ENCODE measurements at regions of chr17 and their contacts with region 1.

Region 1: DNA sequence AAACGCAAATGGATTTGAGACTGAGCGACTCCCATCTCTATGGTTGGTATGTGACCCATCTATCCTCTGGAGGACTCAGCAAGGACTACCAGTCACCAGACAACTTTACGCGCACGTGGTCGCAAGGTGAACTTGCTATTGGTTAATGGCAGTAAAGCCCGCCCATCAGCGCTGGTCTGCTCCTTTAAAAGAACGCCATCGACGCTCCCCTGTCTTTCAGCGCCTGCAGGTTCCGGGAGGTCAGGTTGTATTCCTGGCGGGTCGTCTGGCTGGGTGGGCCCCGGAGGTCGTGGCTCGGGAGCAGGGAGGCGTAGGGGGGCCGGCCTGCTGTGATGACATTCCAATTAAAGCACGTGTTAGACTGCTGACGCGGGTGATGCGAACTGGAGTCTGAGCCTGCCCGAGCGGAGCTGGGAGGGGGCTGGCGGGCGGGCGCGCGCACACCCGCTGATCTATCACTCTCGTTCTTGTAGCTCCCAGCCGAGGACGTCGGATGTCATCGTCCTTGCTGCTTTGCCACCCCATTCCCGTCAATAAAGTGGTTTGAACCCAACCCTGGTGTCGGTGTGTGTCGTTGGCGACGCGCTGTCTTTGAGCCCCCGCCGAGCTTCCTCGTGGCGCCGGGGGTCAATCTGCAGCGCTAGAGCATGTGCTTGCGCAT is 15.9 kb upstream of the ERN1 start:
- DNase-seq: peak; percentile 96
- H3K4me3 ChIP-seq: peak overlapping the region; percentile 73 to 80
- H3K27ac ChIP-seq: peak overlapping the region; percentile 65 to 97
- H3K4me1 ChIP-seq: peaks cover 11 to 28% of the 10 kb centered on the region in 2 experiments
- H3K27me3 ChIP-seq: no peaks in the 10 kb centered on the region
- CTCF ChIP-seq: no peak; the same call in 1 of the 2 replicates
- EP300 ChIP-seq: no peak
- RAD21 ChIP-seq: no peak

Region 2: GRCh38 chr17:64158831-64159590 is 13.1 kb after region 1 on chr17:
- CTCF ChIA-PET with region 1: interaction called, 12 read pairs
- POLR2A ChIA-PET with region 1: interaction called, 10 read pairs
- DNase-seq: no peak
- H3K4me3 ChIP-seq: no peak overlapping the region
- H3K27ac ChIP-seq: peak overlapping the region in 1 of 2 experiments; percentile 12; a peak in 1 of 4 replicates
- H3K4me1 ChIP-seq: peaks cover 0 to 49% of the 10 kb centered on the region in 2 experiments; a peak in 2 of 4 replicates
- H3K27me3 ChIP-seq: no peaks in the 10 kb centered on the region
- CTCF ChIP-seq: no peak
- EP300 ChIP-seq: no peak
- RAD21 ChIP-seq: no peak

Region 3: DNA sequence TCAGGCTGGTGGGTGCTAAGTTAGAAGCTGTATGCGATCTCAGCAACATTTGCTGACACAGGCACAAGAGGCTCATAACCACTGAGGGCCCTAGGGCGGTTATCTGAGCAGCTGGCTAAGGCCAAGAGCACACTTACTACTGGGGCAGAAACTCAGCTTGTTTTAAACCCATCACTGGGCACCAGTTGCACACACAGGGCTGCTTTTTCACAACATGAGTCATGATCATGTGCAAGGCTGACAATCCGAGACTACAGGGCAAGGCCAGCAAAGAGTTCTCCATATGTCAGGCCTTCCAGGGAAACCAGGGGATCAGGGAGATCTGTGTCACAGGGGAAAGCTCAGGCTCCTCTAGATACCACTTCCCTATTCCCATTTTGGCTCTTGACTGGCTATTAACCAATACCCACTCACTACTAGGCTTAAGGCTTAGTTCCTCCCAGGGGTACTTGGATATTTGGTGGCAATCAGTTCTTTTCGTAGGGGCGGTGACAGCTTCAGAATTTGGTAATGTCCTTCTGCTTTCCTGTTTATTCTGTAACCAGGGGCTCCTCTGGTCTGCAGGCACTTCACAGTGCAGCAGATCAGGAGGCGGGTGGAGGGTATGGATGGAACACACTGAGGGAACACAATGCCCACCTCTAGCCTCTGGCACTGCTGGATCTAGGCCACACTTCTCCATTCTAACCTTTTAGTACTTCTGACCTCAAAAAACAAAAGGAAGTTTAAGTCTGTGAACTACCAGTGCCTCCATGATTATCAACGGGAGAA is 29.0 kb after region 1 on chr17:
- CTCF ChIA-PET with region 1: interaction called, 7 read pairs
- POLR2A ChIA-PET with region 1: interaction called, 99 read pairs
- DNase-seq: no peak
- H3K4me3 ChIP-seq: no peak overlapping the region
- H3K27ac ChIP-seq: peak overlapping the region in 1 of 2 experiments; percentile 41; a peak in 1 of 4 replicates
- H3K4me1 ChIP-seq: peaks cover 16 to 42% of the 10 kb centered on the region in 2 experiments; a peak in 3 of 4 replicates
- H3K27me3 ChIP-seq: no peaks in the 10 kb centered on the region
- CTCF ChIP-seq: no peak
- EP300 ChIP-seq: no peak
- RAD21 ChIP-seq: no peak

Region 4: GRCh38 chr17:64240741-64241347 is 95.0 kb after region 1 on chr17:
- CTCF ChIA-PET with region 1: interaction called, 10 read pairs
- POLR2A ChIA-PET with region 1: interaction called, 22 read pairs
- DNase-seq: peak; percentile 87
- H3K4me3 ChIP-seq: peak overlapping the region; percentile 1 to 45; a peak in 3 of 4 replicates
- H3K27ac ChIP-seq: peak overlapping the region; percentile 79 to 97
- H3K4me1 ChIP-seq: peaks cover 36 to 44% of the 10 kb centered on the region in 2 experiments
- H3K27me3 ChIP-seq: no peaks in the 10 kb centered on the region
- CTCF ChIP-seq: no peak
- EP300 ChIP-seq: peak; percentile 51 to 91; a peak in 3 of 4 replicates
- RAD21 ChIP-seq: peak; percentile 46

Region 5: GRCh38 chr17:64262417-64263260 is 116.8 kb after region 1 on chr17 and contains the start of gene TEX2:
- CTCF ChIA-PET with region 1: interaction called, 4 read pairs
- POLR2A ChIA-PET with region 1: interaction called, 50 read pairs
- DNase-seq: peak; percentile 86
- H3K4me3 ChIP-seq: peak within 1 kb of the TSS; percentile 84 to 91
- H3K27ac ChIP-seq: peak within 1 kb of the TSS; percentile 64 to 86
- H3K4me1 ChIP-seq: peaks cover 23 to 32% of the 10 kb centered on the region in 2 experiments; a peak in 3 of 4 replicates
- H3K27me3 ChIP-seq: no peaks in the 10 kb centered on the region
- CTCF ChIP-seq: no peak
- EP300 ChIP-seq: no peak
- RAD21 ChIP-seq: 0 out of 2 replicates have a peak, but pooled peaks have one; percentile 3
- polyA plus RNA-seq, gene TEX2: 24.0 and 30.7 TPM in 2 replicates

Region 6: DNA sequence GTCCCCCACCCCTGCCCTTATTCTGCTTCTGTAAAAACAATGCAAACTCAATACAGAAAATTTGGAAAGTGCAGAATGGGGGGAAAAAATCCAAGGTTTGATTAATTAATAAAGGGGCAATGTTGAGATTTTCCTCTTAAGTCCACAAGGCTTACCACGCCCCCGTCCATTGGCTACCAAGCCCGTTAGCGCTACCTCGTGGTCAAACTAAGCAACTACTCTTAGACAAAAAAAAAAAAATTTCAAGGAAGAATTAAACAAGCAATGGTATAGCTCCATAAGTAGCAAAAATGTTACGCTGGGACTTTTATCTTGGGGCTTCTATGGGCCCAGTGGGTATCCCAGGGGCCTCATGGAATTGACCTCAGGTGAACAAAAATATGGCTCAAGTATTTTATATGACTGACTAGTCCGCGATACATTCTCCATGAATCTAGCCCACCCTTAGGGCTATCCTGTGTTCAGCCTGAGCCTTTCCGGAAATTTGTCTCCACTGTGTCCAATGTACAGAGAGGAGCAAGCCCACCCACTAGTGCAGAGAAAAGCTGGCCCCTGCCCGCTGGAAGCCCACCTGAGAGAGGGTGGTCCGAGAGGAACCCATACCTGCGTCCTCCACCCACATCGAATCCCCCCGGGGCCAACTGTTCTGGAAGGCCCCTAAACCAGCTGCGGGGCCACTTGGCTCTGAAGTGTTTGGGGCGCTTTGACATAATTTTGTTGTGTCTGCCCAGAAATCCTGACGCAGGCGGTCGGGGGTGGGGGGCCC is 136.3 kb after region 1 on chr17:
- CTCF ChIA-PET with region 1: interaction called, 60 read pairs
- POLR2A ChIA-PET with region 1: interaction called, 39 read pairs
- DNase-seq: peak; percentile 80
- H3K4me3 ChIP-seq: no peak overlapping the region
- H3K27ac ChIP-seq: no peak overlapping the region
- H3K4me1 ChIP-seq: peaks cover 0 to 3% of the 10 kb centered on the region in 2 experiments; a peak in 1 of 4 replicates
- H3K27me3 ChIP-seq: no peaks in the 10 kb centered on the region
- CTCF ChIP-seq: peak; percentile 99
- EP300 ChIP-seq: no peak
- RAD21 ChIP-seq: peak; percentile 100

Region 7: DNA sequence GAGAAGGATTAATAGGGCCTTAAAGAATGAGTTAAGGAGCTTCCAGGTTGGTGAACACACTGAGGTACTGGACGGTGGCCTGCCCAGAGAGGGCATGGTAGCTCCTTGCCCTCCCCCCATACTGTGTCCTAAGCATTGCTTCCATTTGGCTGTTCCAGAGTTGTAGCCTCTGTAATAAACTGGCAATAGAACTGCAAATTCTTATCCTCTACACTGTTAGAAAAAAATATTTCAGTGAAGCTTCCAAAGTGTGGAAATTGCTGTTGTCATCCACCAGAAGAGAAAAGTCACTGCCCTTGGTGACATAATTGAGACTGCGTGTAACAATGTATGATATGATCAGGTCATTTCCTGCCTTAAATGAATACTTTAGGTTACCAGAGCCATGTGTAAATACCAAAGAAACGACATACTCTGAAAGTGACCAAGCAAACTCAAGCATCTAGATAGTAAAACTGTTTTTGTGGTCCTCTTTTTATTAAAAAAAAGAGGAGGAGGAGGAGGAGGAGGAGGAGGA is 426.8 kb after region 1 on chr17:
- CTCF ChIA-PET with region 1: no interaction called
- POLR2A ChIA-PET with region 1: no interaction called
- DNase-seq: no peak
- H3K4me3 ChIP-seq: no peak overlapping the region
- H3K27ac ChIP-seq: peak overlapping the region in 1 of 2 experiments; percentile 71; a peak in 2 of 4 replicates
- H3K4me1 ChIP-seq: peaks cover 4 to 29% of the 10 kb centered on the region in 2 experiments
- H3K27me3 ChIP-seq: no peaks in the 10 kb centered on the region
- CTCF ChIP-seq: no peak
- EP300 ChIP-seq: no peak
- RAD21 ChIP-seq: no peak

Measured in SK-N-SH (cell line).